ENCODE measurements at regions of chr1 and their contacts with region 1.

Region 1: DNA sequence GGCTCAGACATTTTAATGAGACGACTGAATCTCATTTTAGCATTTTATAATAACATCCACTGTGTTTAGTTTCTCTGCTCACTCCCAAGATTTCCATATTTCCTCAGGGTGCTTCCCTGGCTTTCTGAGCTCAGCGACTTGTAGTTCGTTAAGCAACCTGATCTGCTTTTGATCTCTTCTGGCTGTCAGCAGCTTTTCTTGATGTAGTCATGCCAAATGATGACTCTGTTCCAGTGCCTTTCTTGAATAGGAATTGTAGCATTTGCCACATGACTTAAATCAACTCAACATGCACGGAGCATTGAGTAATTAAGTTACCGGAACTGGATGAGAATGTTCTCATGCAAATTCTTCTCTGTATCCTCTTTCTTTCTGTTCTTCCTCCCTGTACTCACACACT is 246.1 kb downstream of the FMN2 start:
- DNase-seq: peak; percentile 95
- H3K4me3 Mint-ChIP-seq: peak overlapping the region; percentile 0
- H3K27ac Mint-ChIP-seq: peak overlapping the region; percentile 63
- H3K4me1 Mint-ChIP-seq: peaks cover 21% of the 10 kb centered on the region
- H3K27me3 Mint-ChIP-seq: no peaks in the 10 kb centered on the region
- CTCF ChIP-seq: no peak

Region 2: DNA sequence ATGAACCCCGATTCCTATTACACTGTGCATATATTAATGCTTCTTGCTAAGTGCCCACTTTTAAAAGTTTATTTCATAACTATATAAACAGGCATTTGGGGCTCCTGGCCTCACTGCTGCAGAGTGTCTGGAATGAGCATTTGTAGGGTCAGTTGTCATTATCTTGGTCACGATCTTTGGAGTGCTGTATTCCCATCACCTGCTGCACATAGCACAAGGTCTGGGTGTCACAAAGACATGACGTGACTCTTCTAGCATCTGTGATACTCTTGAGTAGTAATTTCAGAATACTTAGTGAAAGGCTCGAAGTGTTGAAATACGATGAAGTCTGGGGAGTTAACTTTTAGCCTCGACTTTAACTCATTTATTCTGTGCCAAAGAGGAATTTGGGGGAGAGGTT is 59.7 kb before region 1 on chr1:
- CTCF ChIA-PET with region 1: no interaction called
- POLR2A ChIA-PET with region 1: no interaction called
- intact Hi-C with region 1: no loop called
- DNase-seq: no peak
- H3K4me3 Mint-ChIP-seq: no peak overlapping the region
- H3K27ac Mint-ChIP-seq: no peak overlapping the region
- H3K4me1 Mint-ChIP-seq: no peaks in the 10 kb centered on the region
- H3K27me3 Mint-ChIP-seq: no peaks in the 10 kb centered on the region
- CTCF ChIP-seq: no peak

Region 3: DNA sequence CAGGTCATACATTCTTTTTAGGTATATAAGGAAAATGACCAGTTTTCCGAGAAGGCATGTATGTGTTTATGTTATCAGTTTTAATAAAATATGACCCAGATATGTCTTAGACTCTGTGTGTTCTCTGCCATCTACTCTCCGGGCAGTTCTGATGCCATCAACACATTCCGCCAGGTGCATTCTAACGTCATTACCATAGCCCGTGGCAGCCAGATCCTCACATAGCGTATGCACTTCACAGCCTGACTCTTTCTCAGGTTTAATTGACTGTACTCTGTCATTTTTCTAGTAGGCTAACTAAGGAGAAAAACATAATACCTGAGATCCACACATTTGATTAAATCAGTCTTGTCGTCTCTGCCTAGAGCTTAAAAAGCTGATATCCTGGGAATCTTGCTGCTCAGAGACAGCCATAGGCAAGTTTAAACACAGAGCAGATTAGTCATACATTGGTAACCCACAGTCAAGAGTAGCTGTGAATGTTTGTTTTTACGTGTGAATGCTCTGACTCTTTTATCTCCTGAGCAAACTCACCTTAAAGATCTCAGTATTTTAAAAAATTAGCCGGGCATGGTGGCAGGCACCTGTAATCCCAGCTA is 98.3 kb after region 1 on chr1:
- CTCF ChIA-PET with region 1: no interaction called
- POLR2A ChIA-PET with region 1: interaction called, 11 read pairs
- intact Hi-C with region 1: no loop called
- DNase-seq: peak; percentile 78
- H3K4me3 Mint-ChIP-seq: peak overlapping the region; percentile 36
- H3K27ac Mint-ChIP-seq: peak overlapping the region; percentile 70
- H3K4me1 Mint-ChIP-seq: peaks cover 9% of the 10 kb centered on the region
- H3K27me3 Mint-ChIP-seq: no peaks in the 10 kb centered on the region
- CTCF ChIP-seq: no peak

Measured in MCF 10A (cell line).